Activated CD4-positive, alpha-beta memory T cell treated with anti-CD3 and anti-CD28 coated beads for 36 hours (primary cell): ENCODE measurements at regions of chr11 and their contacts with region 1.

Region 1: GRCh38 chr11:134882141-134882540 is 470.1 kb upstream of the B3GAT1 start:
- DNase-seq: no peak
- H3K4me3 Mint-ChIP-seq: no peak overlapping the region
- H3K27ac Mint-ChIP-seq: no peak overlapping the region
- H3K4me1 Mint-ChIP-seq: no peaks in the 10 kb centered on the region
- H3K27me3 Mint-ChIP-seq: peaks cover 31% of the 10 kb centered on the region

Region 2: GRCh38 chr11:134863294-134863693 is 18.8 kb before region 1 on chr11:
- CTCF ChIA-PET with region 1: interaction called, 12 read pairs
- POLR2A ChIA-PET with region 1: no interaction called
- intact Hi-C with region 1: no loop called
- DNase-seq: no peak
- H3K4me3 Mint-ChIP-seq: no peak overlapping the region
- H3K27ac Mint-ChIP-seq: no peak overlapping the region
- H3K4me1 Mint-ChIP-seq: peaks cover 2% of the 10 kb centered on the region
- H3K27me3 Mint-ChIP-seq: peaks cover 9% of the 10 kb centered on the region